Activated T-helper 2 cell treated with anti-CD3 and anti-CD28 coated beads, Interferon-gamma antibody, Interleukin-2, Interleukin-4, amounts not matched to agents 10 μg/mL and 5 μg/mL and 100 μg/mL, durations not matched to agents 14 hours and 24 hours and 36 hours (primary cell): ENCODE measurements at regions of chr3 and their contacts with region 1.

Region 1: GRCh38 chr3:122679085-122679881 is 1.4 kb upstream of the PARP14 start:
- DNase-seq: peak; percentile 77
- H3K4me3 Mint-ChIP-seq: peak overlapping the region; percentile 94
- H3K27ac Mint-ChIP-seq: peak overlapping the region; percentile 98
- H3K4me1 Mint-ChIP-seq: peaks cover 53% of the 10 kb centered on the region
- H3K27me3 Mint-ChIP-seq: no peaks in the 10 kb centered on the region

Region 2: DNA sequence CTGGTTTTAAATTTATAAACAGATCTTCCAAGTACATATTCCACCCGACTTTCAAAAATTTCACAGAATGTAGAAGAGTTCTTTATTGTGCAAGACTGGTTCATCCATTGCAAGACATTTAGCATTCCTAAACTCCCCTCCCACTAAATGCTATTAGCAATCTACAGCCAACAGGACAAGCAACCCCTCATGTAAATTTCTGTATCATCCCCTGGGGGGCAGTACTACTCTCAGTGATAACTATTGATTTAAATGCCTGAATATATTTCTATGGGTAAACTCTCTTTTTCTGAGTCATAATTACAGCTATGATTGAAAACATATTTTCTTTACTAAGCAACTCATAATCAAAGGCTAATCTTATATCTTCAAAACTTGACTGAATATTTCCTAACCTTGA is 795.8 kb before region 1 on chr3:
- intact Hi-C with region 1: no loop called
- DNase-seq: no peak
- H3K4me3 Mint-ChIP-seq: no peak overlapping the region
- H3K27ac Mint-ChIP-seq: no peak overlapping the region
- H3K4me1 Mint-ChIP-seq: peaks cover 4% of the 10 kb centered on the region
- H3K27me3 Mint-ChIP-seq: no peaks in the 10 kb centered on the region

Region 3: DNA sequence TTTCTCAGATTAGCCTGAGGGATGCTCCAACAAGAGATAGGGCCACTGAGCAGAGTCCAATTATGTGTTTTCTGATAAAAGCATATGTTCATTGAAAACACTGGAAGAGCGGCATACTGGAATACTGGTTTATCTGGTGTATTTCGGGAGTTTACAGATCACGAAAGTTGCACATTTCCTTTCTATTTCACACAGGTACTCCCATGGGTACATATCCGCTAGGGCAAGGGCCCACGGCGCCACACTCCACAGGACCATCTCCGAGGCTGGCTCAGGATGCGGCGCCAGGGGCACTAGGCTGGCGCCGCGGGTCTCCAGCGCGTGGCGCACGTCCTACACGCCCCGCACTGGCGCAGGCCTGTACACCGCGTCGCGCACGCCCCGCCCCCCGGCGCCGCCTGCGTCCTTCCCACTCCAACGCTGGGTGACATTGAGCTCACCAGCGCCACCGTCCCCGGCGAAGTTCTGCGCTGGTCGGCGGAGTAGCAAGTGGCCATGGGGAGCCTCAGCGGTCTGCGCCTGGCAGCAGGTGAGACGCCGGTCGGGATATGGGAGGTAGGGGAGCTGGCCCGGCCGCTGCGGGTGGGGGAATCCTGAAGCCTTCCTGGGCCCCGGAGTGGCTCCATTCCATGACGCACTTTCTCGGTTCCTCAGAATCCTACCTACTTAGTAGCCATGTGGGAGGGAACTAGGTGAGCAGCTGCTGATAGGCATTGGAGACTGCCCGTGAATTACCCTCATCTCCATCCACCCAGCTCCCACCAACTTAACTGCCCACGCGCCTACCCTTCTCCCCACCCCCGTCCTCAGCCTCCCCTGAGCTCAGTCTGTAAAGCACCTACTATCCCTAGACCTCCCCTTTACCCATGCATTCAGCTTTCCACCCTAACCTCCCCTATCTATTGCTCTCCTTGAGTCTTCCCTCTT is 295.2 kb before region 1 on chr3 and contains the start of gene FAM162A:
- intact Hi-C with region 1: loop called (anchors 2 kb)
- DNase-seq: peak; percentile 92
- H3K4me3 Mint-ChIP-seq: peak within 1 kb of the TSS; percentile 90
- H3K27ac Mint-ChIP-seq: peak within 1 kb of the TSS; percentile 94
- H3K4me1 Mint-ChIP-seq: peaks cover 62% of the 10 kb centered on the region
- H3K27me3 Mint-ChIP-seq: no peaks in the 10 kb centered on the region
- total RNA-seq, gene FAM162A: 82.2 and 85.8 TPM in 2 replicates

Region 4: GRCh38 chr3:122475316-122475715 is 204.0 kb before region 1 on chr3:
- intact Hi-C with region 1: no loop called
- DNase-seq: no peak
- H3K4me3 Mint-ChIP-seq: no peak overlapping the region
- H3K27ac Mint-ChIP-seq: no peak overlapping the region
- H3K4me1 Mint-ChIP-seq: peaks cover 38% of the 10 kb centered on the region
- H3K27me3 Mint-ChIP-seq: no peaks in the 10 kb centered on the region

Region 5: DNA sequence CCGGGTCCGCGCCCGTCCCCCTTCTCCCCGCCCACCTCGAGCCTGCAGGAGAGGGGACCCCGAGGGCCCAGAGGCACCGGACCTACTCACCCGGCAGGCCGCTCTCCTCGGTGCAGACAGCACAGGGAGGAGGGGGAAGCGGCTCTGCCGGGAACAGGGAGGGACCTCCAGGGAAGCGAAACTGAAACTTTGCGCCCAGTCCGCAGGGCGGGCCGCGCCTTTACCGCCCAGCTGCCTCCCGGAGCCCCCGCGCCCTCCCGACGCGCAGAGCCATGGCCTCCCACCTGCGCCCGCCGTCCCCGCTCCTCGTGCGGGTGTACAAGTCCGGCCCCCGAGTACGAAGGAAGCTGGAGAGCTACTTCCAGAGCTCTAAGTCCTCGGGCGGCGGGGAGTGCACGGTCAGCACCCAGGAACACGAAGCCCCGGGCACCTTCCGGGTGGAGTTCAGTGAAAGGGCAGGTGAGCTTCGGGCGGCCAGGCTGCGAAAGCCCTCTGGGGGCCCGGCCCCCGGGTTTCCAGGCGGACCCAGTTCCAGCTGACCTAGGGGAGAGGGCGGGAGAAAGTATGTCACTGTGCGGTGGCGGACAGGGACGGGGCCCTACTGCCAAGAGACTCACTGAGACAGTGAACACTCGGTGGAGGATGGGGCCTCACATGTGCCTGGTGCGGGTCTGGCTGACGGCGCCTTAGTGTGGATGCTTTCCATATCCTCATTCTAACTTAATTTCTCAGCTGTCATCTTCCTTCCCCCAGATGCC is 114.9 kb before region 1 on chr3 and contains the starts of genes DTX3L and PARP9:
- intact Hi-C with region 1: loop called (anchors 1 kb)
- DNase-seq: peak; percentile 84
- H3K4me3 Mint-ChIP-seq: peak within 1 kb of the TSS; percentile 97
- H3K27ac Mint-ChIP-seq: peak within 1 kb of the TSS; percentile 95
- H3K4me1 Mint-ChIP-seq: peaks cover 65% of the 10 kb centered on the region
- H3K27me3 Mint-ChIP-seq: no peaks in the 10 kb centered on the region
- total RNA-seq, gene DTX3L: 32.4 and 34.3 TPM in 2 replicates
- total RNA-seq, gene PARP9: 29.8 and 31.0 TPM in 2 replicates

Region 6: GRCh38 chr3:122609798-122610559 is 69.3 kb before region 1 on chr3:
- intact Hi-C with region 1: loop called (anchors 1 kb)
- DNase-seq: peak; percentile 22
- H3K4me3 Mint-ChIP-seq: peak overlapping the region; percentile 56
- H3K27ac Mint-ChIP-seq: peak overlapping the region; percentile 88
- H3K4me1 Mint-ChIP-seq: peaks cover 24% of the 10 kb centered on the region
- H3K27me3 Mint-ChIP-seq: no peaks in the 10 kb centered on the region